ENCODE measurements at regions of chrX and their contacts with region 1.

Region 1: GRCh38 chrX:103918581-103919269 is 43.7 kb upstream of the TMSB15B start:
- DNase-seq: peak; percentile 5 to 77 (median 48)
- ATAC-seq: peak; percentile 74
- H3K4me3 ChIP-seq: peak overlapping the region; percentile 62 to 71
- H3K4me3 Mint-ChIP-seq: peak overlapping the region; percentile 90
- H3K27ac ChIP-seq: peak overlapping the region; percentile 65 to 76
- H3K27ac Mint-ChIP-seq: peak overlapping the region; percentile 90
- H3K4me1 ChIP-seq: peaks cover 12% of the 10 kb centered on the region
- H3K4me1 Mint-ChIP-seq: peaks cover 29% of the 10 kb centered on the region
- H3K27me3 ChIP-seq: no peaks in the 10 kb centered on the region
- H3K27me3 Mint-ChIP-seq: no peaks in the 10 kb centered on the region
- CTCF ChIP-seq: no peak

Region 2: DNA sequence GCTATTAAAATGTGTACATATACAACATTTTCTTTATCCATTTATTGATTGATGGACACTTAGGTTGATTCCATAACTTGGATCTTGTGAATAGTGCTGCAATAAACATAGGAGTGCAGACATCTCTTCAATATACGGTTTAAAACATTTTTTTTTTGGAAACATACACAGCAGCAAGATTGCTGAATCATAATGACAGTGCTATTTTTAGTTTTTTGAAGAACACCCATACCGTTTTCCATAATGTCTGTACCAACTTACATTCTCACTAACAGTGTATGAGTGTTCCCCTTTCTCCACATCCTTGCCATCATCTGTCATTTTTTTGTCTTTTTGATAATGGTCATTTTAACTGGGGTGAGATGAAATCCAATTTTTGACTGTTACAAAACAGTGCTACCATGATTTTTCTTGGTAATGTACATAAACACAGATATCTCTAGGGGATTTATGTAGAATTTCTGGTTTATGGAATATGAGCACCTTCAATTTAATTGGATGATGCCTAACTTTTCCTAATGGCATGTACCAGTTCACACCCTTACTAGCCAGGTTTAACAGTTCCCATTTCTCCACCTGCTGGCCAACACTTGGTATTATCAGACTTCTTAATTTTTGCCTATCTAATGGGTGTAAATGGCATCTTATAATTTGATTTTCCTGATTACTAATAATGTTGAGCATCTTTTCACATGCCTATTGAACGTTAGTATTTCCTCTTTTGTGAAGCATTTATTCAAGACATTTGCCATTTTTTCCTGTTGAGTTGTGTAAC is 22.7 kb after region 1 on chrX:
- CTCF ChIA-PET with region 1: interaction called, 5 read pairs
- POLR2A ChIA-PET with region 1: no interaction called
- intact Hi-C with region 1: loop called (anchors 1 to 2 kb)
- DNase-seq: peak in 2 of 9 experiments; percentile 52 to 63
- ATAC-seq: no peak
- H3K4me3 ChIP-seq: no peak overlapping the region
- H3K4me3 Mint-ChIP-seq: no peak overlapping the region
- H3K27ac ChIP-seq: no peak overlapping the region
- H3K27ac Mint-ChIP-seq: no peak overlapping the region
- H3K4me1 ChIP-seq: peaks cover 10% of the 10 kb centered on the region
- H3K4me1 Mint-ChIP-seq: peaks cover 20% of the 10 kb centered on the region
- H3K27me3 ChIP-seq: no peaks in the 10 kb centered on the region
- H3K27me3 Mint-ChIP-seq: no peaks in the 10 kb centered on the region
- CTCF ChIP-seq: peak; percentile 39

Region 3: DNA sequence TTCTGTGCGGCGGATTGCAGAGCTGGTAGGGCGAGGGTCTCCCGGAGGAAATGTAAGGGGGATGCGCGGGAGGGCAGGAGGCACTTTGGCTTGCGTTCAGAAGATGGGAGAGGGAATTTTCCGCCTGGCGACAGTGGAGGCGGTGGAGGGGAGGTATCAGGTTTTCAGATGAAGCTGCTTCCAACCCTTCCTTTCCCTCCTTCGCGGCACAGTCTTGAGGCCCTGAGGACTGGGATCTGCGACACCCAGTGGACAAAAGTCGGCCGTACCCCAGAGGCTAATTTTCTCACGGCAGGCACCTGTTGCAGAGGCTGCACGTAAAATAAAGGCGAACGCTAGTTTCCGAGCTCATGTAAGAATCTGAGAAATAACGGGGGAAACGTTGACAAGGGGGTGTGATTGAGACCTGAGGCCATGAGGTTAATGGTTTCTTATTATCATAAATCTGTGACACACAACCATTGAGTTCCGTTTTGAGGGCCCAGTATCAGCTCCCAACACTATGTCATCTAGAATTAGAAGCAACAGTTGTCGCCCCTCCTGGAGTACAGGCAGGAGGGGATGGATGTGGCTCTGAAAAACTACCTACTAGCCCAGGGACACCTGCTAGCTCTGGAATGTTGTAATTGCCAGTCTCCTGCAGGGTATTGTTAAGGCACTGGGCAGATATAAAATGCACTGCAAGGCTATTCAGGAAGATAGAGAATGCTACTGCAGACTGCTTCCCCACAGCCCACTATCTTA is 194.7 kb after region 1 on chrX:
- CTCF ChIA-PET with region 1: interaction called, 4 read pairs
- POLR2A ChIA-PET with region 1: no interaction called
- intact Hi-C with region 1: loop called in 1 of 2 experiments (anchors 5 kb)
- DNase-seq: peak in 8 of 9 experiments; percentile 31 to 78 (median 58)
- ATAC-seq: peak; percentile 45
- H3K4me3 ChIP-seq: peak overlapping the region; percentile 68 to 71
- H3K4me3 Mint-ChIP-seq: peak overlapping the region; percentile 89
- H3K27ac ChIP-seq: peak overlapping the region; percentile 78 to 79
- H3K27ac Mint-ChIP-seq: peak overlapping the region; percentile 95
- H3K4me1 ChIP-seq: peaks cover 40% of the 10 kb centered on the region
- H3K4me1 Mint-ChIP-seq: peaks cover 53% of the 10 kb centered on the region
- H3K27me3 ChIP-seq: no peaks in the 10 kb centered on the region
- H3K27me3 Mint-ChIP-seq: no peaks in the 10 kb centered on the region
- CTCF ChIP-seq: peak; percentile 41

Region 4: DNA sequence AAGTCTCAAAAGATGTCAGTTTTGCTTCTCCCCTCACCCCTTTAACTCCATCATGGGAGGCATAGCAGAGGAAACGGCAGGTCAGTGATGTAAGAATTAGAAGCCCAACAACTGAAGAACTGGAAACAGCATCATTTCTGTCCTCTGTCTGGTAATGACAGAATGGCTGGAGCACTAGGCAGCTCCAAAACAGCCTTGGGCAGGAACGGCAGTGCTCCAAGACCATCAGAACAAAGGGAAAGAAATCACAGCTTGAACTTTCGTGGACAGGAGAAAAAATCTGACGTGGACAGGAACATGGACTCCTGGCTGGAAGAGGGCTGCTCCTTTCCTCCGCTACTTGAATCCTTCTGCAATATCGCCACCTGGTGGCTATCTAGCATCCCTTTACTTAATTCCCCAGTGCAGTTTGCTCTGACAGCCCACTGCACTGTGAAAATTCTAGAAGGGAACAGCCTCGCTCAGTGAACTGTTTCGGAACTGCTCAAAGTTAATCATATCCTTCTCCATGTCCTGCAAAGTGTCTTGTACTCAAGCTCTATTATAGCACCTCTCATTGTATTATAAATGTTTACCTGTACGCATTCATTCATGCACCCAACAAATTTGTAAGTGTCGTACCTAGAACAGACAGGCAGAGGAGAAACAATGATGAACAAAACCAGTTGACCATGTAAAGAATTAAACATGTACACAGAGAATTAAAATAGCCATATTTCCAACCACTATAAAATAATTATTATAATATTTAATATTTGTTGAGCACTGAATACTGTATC is 217.7 kb after region 1 on chrX:
- CTCF ChIA-PET with region 1: interaction called, 5 read pairs
- POLR2A ChIA-PET with region 1: no interaction called
- intact Hi-C with region 1: loop called (anchors 2 to 5 kb)
- DNase-seq: peak in 8 of 9 experiments; percentile 32 to 82 (median 62)
- ATAC-seq: peak; percentile 70
- H3K4me3 ChIP-seq: no peak overlapping the region
- H3K4me3 Mint-ChIP-seq: peak overlapping the region; percentile 22
- H3K27ac ChIP-seq: no peak overlapping the region
- H3K27ac Mint-ChIP-seq: no peak overlapping the region
- H3K4me1 ChIP-seq: peaks cover 13% of the 10 kb centered on the region
- H3K4me1 Mint-ChIP-seq: peaks cover 28% of the 10 kb centered on the region
- H3K27me3 ChIP-seq: no peaks in the 10 kb centered on the region
- H3K27me3 Mint-ChIP-seq: no peaks in the 10 kb centered on the region
- CTCF ChIP-seq: peak; percentile 61

Region 5: GRCh38 chrX:104156630-104157529 is 238.2 kb after region 1 on chrX and contains the start of gene SLC25A53:
- CTCF ChIA-PET with region 1: no interaction called
- POLR2A ChIA-PET with region 1: interaction called, 7 read pairs
- intact Hi-C with region 1: loop called in 1 of 2 experiments (anchors 5 kb)
- DNase-seq: peak; percentile 55 to 91 (median 71)
- ATAC-seq: peak; percentile 81
- H3K4me3 ChIP-seq: peak within 1 kb of the TSS; percentile 62 to 75
- H3K4me3 Mint-ChIP-seq: peak within 1 kb of the TSS; percentile 97
- H3K27ac ChIP-seq: peak within 1 kb of the TSS; percentile 88 to 92
- H3K27ac Mint-ChIP-seq: peak within 1 kb of the TSS; percentile 100
- H3K4me1 ChIP-seq: peaks cover 10% of the 10 kb centered on the region
- H3K4me1 Mint-ChIP-seq: peaks cover 27% of the 10 kb centered on the region
- H3K27me3 ChIP-seq: no peaks in the 10 kb centered on the region
- H3K27me3 Mint-ChIP-seq: no peaks in the 10 kb centered on the region
- CTCF ChIP-seq: no peak
- total RNA-seq, gene SLC25A53: 7.9 to 8.9 TPM

Region 6: DNA sequence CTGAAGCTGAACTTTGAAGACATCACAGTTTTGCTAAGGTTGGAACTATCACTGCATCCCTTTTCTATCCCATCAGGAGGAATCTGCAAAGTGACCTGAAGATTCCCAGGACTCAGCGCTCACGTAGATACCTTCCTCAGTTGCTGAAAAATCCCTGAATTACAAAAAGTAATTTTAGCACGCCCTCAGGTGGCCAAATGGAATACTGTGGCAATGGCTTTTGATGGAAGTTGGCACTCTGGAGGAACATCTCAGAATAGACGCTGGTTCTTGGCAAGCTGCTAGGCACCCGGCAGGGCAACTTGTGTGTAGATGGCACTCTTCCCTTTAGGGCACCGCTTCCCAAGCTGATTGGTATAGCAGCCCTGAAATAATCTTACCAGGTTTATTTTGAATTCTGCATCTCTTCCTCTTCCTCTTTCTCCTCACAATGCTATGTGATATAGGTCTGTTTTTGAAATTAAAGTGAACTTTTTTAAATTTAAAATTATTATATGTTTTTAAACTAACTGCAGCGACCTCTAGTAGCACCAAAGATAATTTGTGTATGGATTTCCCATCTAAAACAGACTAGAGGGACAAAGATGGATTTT is 352.3 kb after region 1 on chrX:
- CTCF ChIA-PET with region 1: no interaction called
- POLR2A ChIA-PET with region 1: no interaction called
- intact Hi-C with region 1: loop called in 1 of 2 experiments (anchors 5 kb)
- DNase-seq: peak in 6 of 9 experiments; percentile 1 to 29 (median 12)
- ATAC-seq: no peak
- H3K4me3 ChIP-seq: peak overlapping the region; percentile 28 to 35
- H3K4me3 Mint-ChIP-seq: peak overlapping the region; percentile 57
- H3K27ac ChIP-seq: no peak overlapping the region
- H3K27ac Mint-ChIP-seq: no peak overlapping the region
- H3K4me1 ChIP-seq: no peaks in the 10 kb centered on the region
- H3K4me1 Mint-ChIP-seq: peaks cover 3% of the 10 kb centered on the region
- H3K27me3 ChIP-seq: no peaks in the 10 kb centered on the region
- H3K27me3 Mint-ChIP-seq: peaks cover 18% of the 10 kb centered on the region
- CTCF ChIP-seq: peak; percentile 26